Activated naive CD4-positive, alpha-beta T cell treated with anti-CD3 and anti-CD28 coated beads for 36 hours (primary cell): ENCODE measurements at regions of chr3 and their contacts with region 1.

Region 1: GRCh38 chr3:185929192-185930151 is 8.3 kb downstream of the TRA2B start:
- DNase-seq: no peak
- H3K4me3 Mint-ChIP-seq: peak overlapping the region; percentile 70
- H3K27ac Mint-ChIP-seq: peak overlapping the region; percentile 78
- H3K4me1 Mint-ChIP-seq: peaks cover 85% of the 10 kb centered on the region
- H3K27me3 Mint-ChIP-seq: no peaks in the 10 kb centered on the region

Region 2: GRCh38 chr3:185824476-185825378 is 104.7 kb before region 1 on chr3 and contains the start of gene IGF2BP2:
- CTCF ChIA-PET with region 1: no interaction called
- intact Hi-C with region 1: loop called (anchors 5 kb)
- DNase-seq: peak; percentile 57
- H3K4me3 Mint-ChIP-seq: peak within 1 kb of the TSS; percentile 81
- H3K27ac Mint-ChIP-seq: no peak within 1 kb of the TSS
- H3K4me1 Mint-ChIP-seq: peaks cover 3% of the 10 kb centered on the region
- H3K27me3 Mint-ChIP-seq: peaks cover 57% of the 10 kb centered on the region
- total RNA-seq, gene IGF2BP2: 0.43 to 0.44 TPM

Region 3: GRCh38 chr3:185912929-185913901 is 16.3 kb before region 1 on chr3:
- CTCF ChIA-PET with region 1: no interaction called
- intact Hi-C with region 1: loop called (anchors 2 kb)
- DNase-seq: no peak
- H3K4me3 Mint-ChIP-seq: no peak overlapping the region
- H3K27ac Mint-ChIP-seq: peak overlapping the region; percentile 31
- H3K4me1 Mint-ChIP-seq: peaks cover 3% of the 10 kb centered on the region
- H3K27me3 Mint-ChIP-seq: no peaks in the 10 kb centered on the region

Region 4: DNA sequence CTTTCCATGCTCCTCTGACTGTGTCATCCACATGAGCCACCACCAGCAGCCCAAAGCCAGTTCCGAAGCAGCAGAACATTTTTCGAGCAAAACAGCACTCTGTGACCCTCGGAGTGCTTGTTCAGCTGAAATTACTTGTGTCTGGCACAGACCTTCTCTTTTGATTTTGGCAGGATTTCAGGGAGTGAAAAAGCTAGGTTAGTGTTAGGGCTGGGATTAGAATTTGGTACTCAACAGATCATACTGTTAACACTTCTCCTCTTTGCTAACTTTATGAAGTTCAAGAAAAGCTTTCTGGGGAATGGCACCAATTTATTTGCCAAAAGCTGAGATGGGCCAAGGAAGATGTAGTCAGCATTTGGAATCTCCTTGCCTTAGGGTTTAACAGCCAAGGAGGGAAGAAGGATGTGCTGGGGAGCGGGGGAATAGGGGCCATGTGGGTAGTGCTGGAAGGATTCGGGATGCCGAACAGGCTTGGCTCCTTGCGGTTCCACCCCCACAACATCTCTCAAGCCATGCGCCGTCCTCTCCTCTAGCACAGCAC is 63.4 kb after region 1 on chr3:
- CTCF ChIA-PET with region 1: no interaction called
- intact Hi-C with region 1: no loop called
- DNase-seq: no peak
- H3K4me3 Mint-ChIP-seq: no peak overlapping the region
- H3K27ac Mint-ChIP-seq: no peak overlapping the region
- H3K4me1 Mint-ChIP-seq: no peaks in the 10 kb centered on the region
- H3K27me3 Mint-ChIP-seq: no peaks in the 10 kb centered on the region